ENCODE measurements at regions of chr5 and their contacts with region 1.

Region 1: DNA sequence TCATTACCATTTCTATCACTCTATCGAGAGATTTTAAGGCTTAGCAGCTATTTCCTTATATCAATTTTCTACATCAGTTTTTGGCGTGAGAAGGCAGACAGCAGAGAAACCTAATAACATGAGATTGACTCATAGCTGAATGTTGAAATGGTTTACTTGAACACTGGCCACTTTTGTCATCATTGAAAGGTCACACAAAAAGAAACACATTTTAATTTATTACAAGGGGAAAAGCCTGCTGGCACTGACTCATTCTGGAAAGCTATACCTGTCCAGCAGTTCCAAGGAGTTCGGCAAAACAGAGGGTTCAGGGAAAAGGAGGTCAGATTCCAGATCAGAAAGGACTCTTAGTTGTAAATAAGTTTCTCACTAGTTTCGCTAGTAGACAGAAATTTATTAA is 566.4 kb downstream of the DNAH5 start:
- DNase-seq: no peak

Region 2: DNA sequence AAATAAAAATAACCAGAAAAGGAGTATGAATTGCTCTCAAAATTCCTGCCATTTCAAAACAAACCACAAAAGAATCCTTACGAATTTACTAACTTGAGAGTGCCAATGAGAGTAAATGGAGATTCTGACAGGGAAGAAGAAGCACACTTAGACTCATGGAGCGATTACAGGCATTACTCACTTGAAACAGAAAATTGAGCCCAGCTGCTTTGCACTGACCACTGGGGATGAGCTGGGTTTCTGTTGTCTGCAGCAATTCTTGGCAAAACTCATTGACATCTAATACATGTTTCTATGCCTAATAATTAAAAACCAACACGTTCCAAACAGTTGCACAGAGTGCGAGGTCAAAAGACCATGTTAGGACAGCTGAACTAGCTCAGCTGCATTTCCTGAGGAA is 165.2 kb before region 1 on chr5:
- intact Hi-C with region 1: loop called in 1 of 2 experiments (anchors 5 kb)
- DNase-seq: no peak

Region 3: DNA sequence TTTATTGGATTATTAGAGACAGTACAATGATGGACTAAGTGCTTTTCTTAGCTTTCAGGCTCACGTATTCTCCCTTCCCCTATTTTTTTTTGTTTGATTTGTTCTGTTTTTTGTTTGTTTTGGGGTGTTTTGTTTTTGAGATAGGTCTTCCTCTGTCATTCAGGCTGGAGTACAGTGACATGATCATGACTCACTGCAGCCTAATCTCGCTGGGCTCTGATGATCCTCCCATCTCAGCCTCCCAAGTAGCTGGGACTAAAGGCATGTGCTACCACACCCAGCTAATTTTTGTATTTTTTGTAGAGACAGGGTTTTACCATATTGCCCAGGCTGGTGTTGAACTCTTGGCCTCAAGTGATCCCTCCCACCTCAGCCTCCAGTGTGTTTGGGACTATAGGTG is 39.1 kb before region 1 on chr5:
- intact Hi-C with region 1: no loop called
- DNase-seq: no peak

Region 4: GRCh38 chr5:13454050-13454449 is 76.0 kb after region 1 on chr5:
- intact Hi-C with region 1: no loop called
- DNase-seq: no peak